Activated T-helper 1 cell treated with anti-CD3 and anti-CD28 coated beads, Interleukin-12 subunit alpha, Interleukin-12 subunit beta, Interleukin-2, Interleukin-4 antibody, amounts not matched to agents 30 ng/mL and 10 ng/mL and 1 ng/mL, durations not matched to agents 14 hours and 24 hours and 36 hours (primary cell): ENCODE measurements at regions of chr6 and their contacts with region 1.

Region 1: GRCh38 chr6:130215526-130215925 is 7.2 kb downstream of the SAMD3 start:
- DNase-seq: peak; percentile 49
- H3K4me3 Mint-ChIP-seq: peak overlapping the region; percentile 70
- H3K27ac Mint-ChIP-seq: peak overlapping the region; percentile 67
- H3K4me1 Mint-ChIP-seq: peaks cover 70% of the 10 kb centered on the region
- H3K27me3 Mint-ChIP-seq: no peaks in the 10 kb centered on the region

Region 2: DNA sequence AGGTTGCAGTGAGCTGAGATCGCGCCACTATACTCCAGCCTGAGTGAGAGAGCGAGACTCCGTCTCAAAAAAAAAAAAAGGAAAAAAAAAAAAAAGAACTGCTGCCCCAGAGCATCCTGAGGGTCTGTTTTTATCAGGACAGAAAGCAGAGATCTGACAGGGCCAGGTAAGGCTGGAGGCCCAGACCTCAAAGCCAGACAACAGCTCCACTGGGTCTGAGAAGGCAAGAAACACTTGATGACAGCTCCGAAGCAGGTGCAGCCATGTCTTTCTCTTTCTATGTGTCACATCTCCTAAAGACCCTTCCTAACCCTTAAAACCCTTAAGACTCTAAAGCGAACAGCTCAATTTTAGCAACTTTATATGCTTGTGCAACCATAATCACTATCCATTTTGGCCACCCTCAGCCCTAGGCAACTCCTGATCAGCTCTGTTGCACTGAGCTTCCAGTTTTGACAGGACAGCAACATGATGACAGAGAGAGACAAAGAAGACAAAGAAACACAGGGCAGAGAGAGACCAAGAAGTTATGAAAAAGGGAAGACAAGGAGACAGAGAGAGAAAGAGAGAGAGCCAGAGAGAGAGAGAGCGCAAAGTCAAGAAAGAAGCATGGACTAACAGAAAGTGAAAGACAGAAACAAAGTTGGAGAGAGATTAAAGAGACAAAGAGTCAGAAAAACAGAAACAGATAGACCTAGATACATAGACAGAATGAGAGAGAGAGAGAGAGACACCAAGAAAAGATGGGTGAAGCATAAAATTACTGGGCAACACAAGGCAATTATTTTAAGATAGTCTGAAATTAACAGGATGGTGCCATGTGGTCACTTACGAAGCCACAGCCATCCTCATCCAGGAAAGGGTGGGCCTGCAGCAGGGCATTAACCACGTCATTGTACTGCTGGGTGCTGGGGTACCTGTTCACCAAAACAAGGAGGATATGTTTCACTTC is 32.0 kb before region 1 on chr6:
- intact Hi-C with region 1: loop called (anchors 1 kb)
- DNase-seq: peak; percentile 40
- H3K4me3 Mint-ChIP-seq: peak overlapping the region; percentile 47
- H3K27ac Mint-ChIP-seq: peak overlapping the region; percentile 90
- H3K4me1 Mint-ChIP-seq: peaks cover 50% of the 10 kb centered on the region
- H3K27me3 Mint-ChIP-seq: no peaks in the 10 kb centered on the region

Region 3: DNA sequence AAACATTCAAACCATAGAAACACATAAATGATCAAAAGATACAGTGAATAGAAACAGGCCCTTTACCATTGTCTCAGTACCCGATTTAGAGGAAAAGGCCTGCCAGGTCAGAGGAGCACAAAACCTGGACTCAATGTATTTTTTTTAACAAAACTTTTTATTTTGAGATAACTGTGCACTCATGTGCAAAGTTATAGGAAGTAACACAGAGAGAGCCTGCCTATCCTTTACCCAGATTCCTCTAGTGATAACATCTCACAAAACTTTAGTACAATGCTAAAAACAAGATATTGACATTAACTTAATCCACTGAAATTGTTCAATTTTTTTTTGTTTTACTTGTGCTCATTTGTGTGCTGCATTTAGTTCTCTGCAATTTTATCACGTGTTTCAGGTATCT is 44.0 kb after region 1 on chr6:
- intact Hi-C with region 1: loop called (anchors 2 kb)
- DNase-seq: no peak
- H3K4me3 Mint-ChIP-seq: no peak overlapping the region
- H3K27ac Mint-ChIP-seq: peak overlapping the region; percentile 51
- H3K4me1 Mint-ChIP-seq: peaks cover 46% of the 10 kb centered on the region
- H3K27me3 Mint-ChIP-seq: no peaks in the 10 kb centered on the region